Psoas muscle (tissue), 8 donors: ENCODE measurements at regions of chr6 and their contacts with region 1.

Region 1: GRCh38 chr6:122184401-122184827 is 215.0 kb upstream of the HSF2 start:
- DNase-seq: no peak
- ATAC-seq: peak in 1 of 4 donors; percentile 78
- H3K4me3 ChIP-seq: peak overlapping the region; percentile 13
- H3K27ac ChIP-seq: no peak overlapping the region
- H3K4me1 ChIP-seq: no peaks in the 10 kb centered on the region
- H3K27me3 ChIP-seq: no peaks in the 10 kb centered on the region
- CTCF ChIP-seq: peak; percentile 57

Region 2: DNA sequence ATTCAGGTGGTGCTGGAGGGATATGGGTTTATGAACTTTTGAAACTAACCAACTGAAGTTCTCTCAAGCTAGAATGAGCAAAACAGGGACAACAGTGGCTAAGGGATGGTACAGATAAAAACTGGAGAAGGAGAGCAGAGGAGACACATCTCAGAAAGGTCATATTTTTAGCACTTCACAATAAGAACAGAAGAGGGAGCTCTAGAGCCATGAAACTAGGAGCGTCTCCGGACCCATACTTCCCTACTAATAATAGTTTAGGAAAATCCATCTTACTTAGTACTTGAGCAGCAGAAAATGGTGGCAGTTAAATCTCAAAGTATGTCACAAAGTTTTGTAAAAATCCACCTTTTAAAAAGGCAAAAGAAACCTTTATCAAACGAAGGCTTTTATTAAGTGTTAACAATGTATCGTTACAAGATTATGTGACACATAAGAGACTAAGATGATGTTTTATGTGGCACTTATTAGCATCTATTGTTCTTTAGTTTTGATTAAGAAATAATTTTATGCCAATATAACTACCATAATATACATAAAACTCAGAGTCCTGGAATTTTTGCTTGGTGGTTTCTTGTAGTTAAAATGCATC is 1128.7 kb before region 1 on chr6:
- intact Hi-C with region 1: loop called in 1 of 2 experiments (anchors 10 kb)
- DNase-seq: no peak
- ATAC-seq: peak in 1 of 4 donors; percentile 63
- H3K4me3 ChIP-seq: no peak overlapping the region
- H3K27ac ChIP-seq: no peak overlapping the region
- H3K4me1 ChIP-seq: no peaks in the 10 kb centered on the region
- H3K27me3 ChIP-seq: no peaks in the 10 kb centered on the region
- CTCF ChIP-seq: peak; percentile 67

Region 3: GRCh38 chr6:122049341-122049740 is 135.1 kb before region 1 on chr6:
- intact Hi-C with region 1: loop called (anchors 10 kb)
- DNase-seq: no peak
- ATAC-seq: peak in 1 of 4 donors; percentile 64
- H3K4me3 ChIP-seq: peak overlapping the region; percentile 33
- H3K27ac ChIP-seq: no peak overlapping the region
- H3K4me1 ChIP-seq: peaks cover 8% of the 10 kb centered on the region
- H3K27me3 ChIP-seq: peaks cover 0 to 3% (median 0%) of the 10 kb centered on the region in 3 donors
- CTCF ChIP-seq: no peak

Region 4: DNA sequence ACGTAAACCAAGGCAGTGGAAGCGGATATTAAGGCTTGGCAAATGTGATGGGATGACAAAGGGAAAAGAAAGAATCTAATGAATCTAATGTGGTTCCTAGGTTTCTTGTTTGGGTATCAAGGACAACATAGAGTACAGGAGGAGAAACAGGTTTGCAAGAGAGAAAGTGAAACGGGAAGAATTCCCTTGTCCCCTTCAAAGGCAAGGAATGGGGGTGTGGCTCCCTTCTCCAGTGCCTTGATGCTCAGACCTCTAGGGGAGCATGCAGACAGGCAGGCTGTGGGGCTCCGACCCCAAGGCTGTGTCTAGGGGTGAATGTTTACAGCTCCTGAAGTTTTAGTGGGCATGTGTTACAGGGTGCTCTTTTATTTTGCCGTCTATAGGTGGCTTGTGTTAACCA is 102.5 kb before region 1 on chr6:
- intact Hi-C with region 1: no loop called
- DNase-seq: no peak
- ATAC-seq: no peak
- H3K4me3 ChIP-seq: no peak overlapping the region
- H3K27ac ChIP-seq: no peak overlapping the region
- H3K4me1 ChIP-seq: no peaks in the 10 kb centered on the region
- H3K27me3 ChIP-seq: no peaks in the 10 kb centered on the region
- CTCF ChIP-seq: no peak

Region 5: GRCh38 chr6:122222761-122223160 is 38.3 kb after region 1 on chr6:
- intact Hi-C with region 1: no loop called
- DNase-seq: no peak
- ATAC-seq: peak in 3 of 4 donors; percentile 66 to 78 (median 76)
- H3K4me3 ChIP-seq: peak overlapping the region; percentile 35
- H3K27ac ChIP-seq: peak overlapping the region; percentile 70
- H3K4me1 ChIP-seq: no peaks in the 10 kb centered on the region
- H3K27me3 ChIP-seq: no peaks in the 10 kb centered on the region
- CTCF ChIP-seq: no peak